ENCODE measurements at regions of chr17 and their contacts with region 1.

Region 1: GRCh38 chr17:49640556-49640955 is 37.3 kb downstream of the SPOP start:
- DNase-seq: no peak
- ATAC-seq: no peak
- H3K4me3 ChIP-seq: no peak overlapping the region
- H3K4me3 Mint-ChIP-seq: no peak overlapping the region
- H3K27ac ChIP-seq: no peak overlapping the region
- H3K27ac Mint-ChIP-seq: no peak overlapping the region
- H3K4me1 ChIP-seq: no peaks in the 10 kb centered on the region
- H3K4me1 Mint-ChIP-seq: peaks cover 47% of the 10 kb centered on the region
- H3K27me3 ChIP-seq: no peaks in the 10 kb centered on the region
- H3K27me3 Mint-ChIP-seq: no peaks in the 10 kb centered on the region
- CTCF ChIP-seq: no peak

Region 2: DNA sequence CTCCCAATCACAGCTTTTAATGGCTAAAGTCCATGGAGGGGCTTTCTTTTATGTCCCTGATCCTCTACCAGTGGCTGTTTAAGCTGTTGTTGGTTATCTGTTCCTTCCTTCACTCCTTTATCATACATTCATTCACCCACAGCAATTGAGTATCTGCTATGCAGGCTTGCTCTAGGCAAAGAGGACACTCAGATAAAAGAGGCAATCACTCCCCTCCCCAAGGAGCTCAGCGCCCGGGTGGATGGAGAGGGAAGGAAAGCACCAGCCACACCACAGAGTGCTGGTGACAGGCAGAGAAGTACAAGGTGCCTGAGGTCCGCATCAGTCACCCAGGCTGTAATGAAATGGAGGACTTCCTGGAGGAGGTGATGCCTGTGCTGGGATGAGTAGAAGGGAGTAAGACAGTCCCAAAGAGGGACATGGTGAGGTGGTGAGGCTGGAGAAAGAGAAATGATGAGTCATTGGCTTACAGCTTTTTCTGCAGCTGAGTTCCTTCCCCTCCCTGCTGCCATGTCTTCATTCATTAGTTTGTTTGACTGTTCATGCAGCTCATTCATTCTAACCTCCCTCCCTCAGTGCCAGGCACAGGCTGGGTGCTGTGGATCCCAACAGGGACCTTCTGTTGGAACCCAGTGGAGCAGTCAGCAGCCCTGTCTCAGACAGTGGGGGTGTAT is 158.3 kb before region 1 on chr17:
- CTCF ChIA-PET with region 1: no interaction called
- POLR2A ChIA-PET with region 1: no interaction called
- intact Hi-C with region 1: no loop called
- DNase-seq: no peak
- ATAC-seq: no peak
- H3K4me3 ChIP-seq: no peak overlapping the region
- H3K4me3 Mint-ChIP-seq: no peak overlapping the region
- H3K27ac ChIP-seq: no peak overlapping the region
- H3K27ac Mint-ChIP-seq: no peak overlapping the region
- H3K4me1 ChIP-seq: no peaks in the 10 kb centered on the region
- H3K4me1 Mint-ChIP-seq: no peaks in the 10 kb centered on the region
- H3K27me3 ChIP-seq: peaks cover 28 to 42% of the 10 kb centered on the region in 2 experiments
- H3K27me3 Mint-ChIP-seq: peaks cover 80% of the 10 kb centered on the region
- CTCF ChIP-seq: no peak

Region 3: DNA sequence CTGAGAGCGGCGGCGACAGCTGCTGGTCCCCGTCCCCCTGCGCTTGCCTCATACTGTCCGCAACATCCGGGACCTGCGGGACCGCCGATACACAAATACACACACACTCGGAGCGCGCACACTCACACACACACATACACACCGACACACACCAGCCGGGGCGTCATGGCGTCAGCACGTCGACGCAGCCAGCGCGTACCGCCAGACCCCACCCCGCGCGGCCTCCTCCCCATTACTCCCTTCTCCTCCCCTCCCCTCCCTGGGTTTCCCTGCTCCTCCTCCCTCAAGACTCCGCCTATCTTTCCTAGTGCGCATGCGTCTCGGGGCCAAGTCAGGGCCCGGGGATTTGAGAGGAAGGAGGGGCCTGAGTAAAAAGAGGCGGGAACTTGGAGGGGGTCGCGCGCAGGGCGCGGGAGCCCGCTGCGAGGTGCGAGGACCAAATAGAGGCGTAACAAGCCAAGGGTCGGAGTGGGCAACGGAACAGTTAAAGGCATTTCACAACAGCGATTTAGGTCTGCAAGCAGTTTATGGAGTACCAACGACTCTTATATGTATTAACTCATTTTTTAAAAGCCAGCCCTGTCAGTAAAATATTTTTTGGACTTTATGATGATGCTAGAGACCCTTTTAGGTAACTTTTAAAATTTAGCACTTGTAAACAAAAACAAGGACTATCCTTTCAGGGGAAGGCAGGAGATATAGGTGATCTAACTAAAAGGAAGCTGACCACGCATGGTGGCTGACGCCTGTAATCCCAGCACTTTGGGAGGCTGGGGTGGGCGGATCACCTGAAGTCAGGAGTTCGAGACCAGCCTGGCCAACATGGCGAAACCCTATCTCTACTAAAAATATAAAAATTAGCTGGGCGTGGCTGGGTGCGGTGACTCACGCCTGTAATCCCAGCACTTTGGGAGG is 37.6 kb after region 1 on chr17 and contains the start of gene SPOP:
- CTCF ChIA-PET with region 1: interaction called, 3 read pairs
- POLR2A ChIA-PET with region 1: no interaction called
- intact Hi-C with region 1: loop called in 1 of 2 experiments (anchors 5 kb)
- DNase-seq: peak; percentile 98 to 100 (median 99)
- ATAC-seq: peak; percentile 88
- H3K4me3 ChIP-seq: peak within 1 kb of the TSS; percentile 86
- H3K4me3 Mint-ChIP-seq: peak within 1 kb of the TSS; percentile 98
- H3K27ac ChIP-seq: peak within 1 kb of the TSS; percentile 98 to 99
- H3K27ac Mint-ChIP-seq: peak within 1 kb of the TSS; percentile 95
- H3K4me1 ChIP-seq: peaks cover 29% of the 10 kb centered on the region
- H3K4me1 Mint-ChIP-seq: peaks cover 50% of the 10 kb centered on the region
- H3K27me3 ChIP-seq: no peaks in the 10 kb centered on the region
- H3K27me3 Mint-ChIP-seq: peaks cover 5% of the 10 kb centered on the region
- CTCF ChIP-seq: no peak
- total RNA-seq, gene SPOP: 38.7 to 41.5 TPM

Region 4: GRCh38 chr17:49815761-49816281 is 175.3 kb after region 1 on chr17:
- CTCF ChIA-PET with region 1: no interaction called
- POLR2A ChIA-PET with region 1: no interaction called
- intact Hi-C with region 1: no loop called
- DNase-seq: no peak
- ATAC-seq: no peak
- H3K4me3 ChIP-seq: no peak overlapping the region
- H3K4me3 Mint-ChIP-seq: no peak overlapping the region
- H3K27ac ChIP-seq: peak overlapping the region in 1 of 2 donors; percentile 43
- H3K27ac Mint-ChIP-seq: peak overlapping the region; percentile 96
- H3K4me1 ChIP-seq: peaks cover 51% of the 10 kb centered on the region
- H3K4me1 Mint-ChIP-seq: peaks cover 73% of the 10 kb centered on the region
- H3K27me3 ChIP-seq: no peaks in the 10 kb centered on the region
- H3K27me3 Mint-ChIP-seq: no peaks in the 10 kb centered on the region
- CTCF ChIP-seq: no peak